Head of caudate nucleus (tissue), 42 donors: ENCODE measurements at regions of chr3 and their contacts with region 1.

Region 1: GRCh38 chr3:159616212-159616825 is 372.3 kb upstream of the IL12A start:
- DNase-seq: peak in 34 of 42 donors; percentile 7 to 71 (median 34)

Region 2: DNA sequence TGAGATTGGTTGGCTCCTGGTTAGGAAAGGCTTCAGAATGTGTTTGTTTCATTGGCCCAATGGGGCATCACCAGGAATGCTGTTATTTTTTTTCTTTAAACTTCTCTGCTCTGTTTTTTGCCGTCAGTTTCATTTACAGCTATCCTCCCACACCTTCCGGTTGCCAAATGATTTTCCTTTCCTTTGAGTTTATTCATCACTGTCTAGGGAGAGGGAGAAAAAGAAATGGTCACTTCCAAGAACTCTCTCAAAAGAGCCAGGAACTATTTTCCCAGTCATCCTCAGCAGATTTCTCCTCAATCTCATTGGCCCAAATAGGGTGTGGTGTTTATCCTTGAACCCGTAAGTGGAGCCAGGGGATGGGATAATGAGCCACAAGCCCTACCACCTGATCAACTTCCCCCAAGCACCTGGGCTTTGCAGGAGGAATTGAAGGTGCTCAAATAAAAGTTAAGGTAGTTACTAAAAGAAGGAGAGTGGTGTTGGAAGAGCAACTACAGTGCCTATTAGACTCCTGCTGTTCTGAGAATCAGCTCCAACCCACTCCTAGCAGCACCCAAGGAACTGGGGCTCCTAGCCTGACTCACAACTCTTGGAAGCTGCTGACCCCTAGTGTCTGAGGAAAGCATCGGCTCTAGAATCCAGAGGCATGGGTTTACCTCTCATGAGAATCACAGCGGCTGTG is 188.5 kb after region 1 on chr3:
- intact Hi-C with region 1: loop called (anchors 10 kb)
- DNase-seq: peak; percentile 53 to 94 (median 86)